HCT116 (cell line): ENCODE measurements at regions of chr3 and their contacts with region 1.

Region 1: DNA sequence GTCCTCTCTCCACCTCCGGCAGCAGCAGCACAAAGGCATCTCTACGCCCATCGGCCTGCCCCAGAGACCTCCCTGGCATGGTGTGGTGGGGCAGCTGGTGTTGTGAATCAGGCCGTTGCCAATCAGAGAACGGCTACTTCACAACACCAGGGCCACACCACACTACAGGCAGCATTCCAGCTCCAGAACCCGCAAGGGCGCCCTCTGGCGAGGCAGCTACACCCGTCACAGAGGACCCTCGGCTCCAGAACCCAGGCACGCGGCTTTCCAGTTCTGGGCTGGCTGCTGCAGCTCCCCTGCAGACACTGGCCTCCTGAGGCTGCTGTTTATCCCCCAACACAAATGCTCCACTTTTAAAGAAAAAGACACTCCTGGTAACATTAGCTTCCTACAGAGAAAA is 127.5 kb upstream of the TOPAZ1 start:
- DNase-seq: peak; percentile 42
- ATAC-seq: peak; percentile 99
- H3K4me3 ChIP-seq: no peak overlapping the region
- H3K27ac ChIP-seq: no peak overlapping the region
- H3K4me1 ChIP-seq: peaks cover 0 to 11% of the 10 kb centered on the region in 2 experiments; a peak in 3 of 4 replicates
- H3K27me3 ChIP-seq: peaks cover 6% of the 10 kb centered on the region; the same call in 1 of the 2 replicates
- CTCF ChIP-seq: peak; percentile 61 to 85 (median 72); a peak in 5 of 6 replicates
- POLR2A ChIP-seq: no peak
- RAD21 ChIP-seq: peak; percentile 69

Region 2: DNA sequence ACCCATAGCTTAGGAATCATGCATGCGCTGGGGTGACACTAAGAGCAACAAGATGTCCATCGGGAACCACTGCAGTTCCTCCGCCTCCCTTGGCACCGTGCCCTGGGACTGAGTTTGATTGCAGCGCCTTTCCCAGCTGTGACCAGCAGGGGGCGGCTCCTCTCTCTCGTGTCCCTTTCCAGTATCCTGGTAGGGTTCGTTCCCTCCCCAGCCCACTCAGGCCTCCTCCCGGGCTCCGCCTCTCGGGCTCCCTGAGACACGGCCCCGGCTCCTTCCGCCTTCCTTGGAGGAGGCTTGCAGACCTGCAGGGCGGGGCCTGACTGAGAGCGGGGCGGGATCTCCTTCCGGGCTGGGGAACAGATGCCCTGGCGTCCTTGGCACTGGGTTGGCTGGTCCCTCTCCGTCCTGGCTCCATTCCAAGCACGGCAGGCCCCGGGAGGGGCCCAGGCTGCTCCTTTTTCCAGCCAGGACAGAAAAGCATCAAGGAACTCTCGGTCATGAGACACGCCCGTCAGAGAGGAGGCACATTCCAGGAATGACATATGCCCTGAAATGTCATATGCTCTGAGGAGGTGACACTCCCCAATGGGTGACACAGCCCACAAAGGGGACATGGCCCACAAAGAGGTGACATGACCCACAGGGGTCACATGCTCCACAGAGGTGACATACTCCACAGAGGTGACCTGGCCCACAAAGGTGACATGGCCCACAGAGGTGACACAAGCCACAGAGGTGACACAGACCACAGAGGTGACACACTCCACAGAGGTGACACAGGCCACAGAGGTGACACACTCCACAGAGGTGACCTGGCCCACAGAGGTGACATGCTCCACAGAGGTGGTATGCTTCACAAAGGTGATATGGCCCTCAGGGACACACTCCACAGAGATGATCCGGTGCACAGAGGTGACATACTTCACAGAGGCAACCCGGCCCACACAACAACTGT is 344.4 kb before region 1 on chr3:
- CTCF ChIA-PET with region 1: interaction called, 6 read pairs
- POLR2A ChIA-PET with region 1: interaction called, 4 read pairs
- RAD21 ChIA-PET with region 1: no interaction called
- intact Hi-C with region 1: loop called (anchors 1 kb)
- DNase-seq: peak; percentile 94
- ATAC-seq: peak; percentile 100
- H3K4me3 ChIP-seq: peak overlapping the region; percentile 21 to 47
- H3K27ac ChIP-seq: peak overlapping the region; percentile 2; the same call in 1 of the 2 replicates
- H3K4me1 ChIP-seq: peaks cover 18 to 39% of the 10 kb centered on the region in 2 experiments
- H3K27me3 ChIP-seq: no peaks in the 10 kb centered on the region
- CTCF ChIP-seq: peak; percentile 84 to 90 (median 89)
- POLR2A ChIP-seq: peak; percentile 26
- RAD21 ChIP-seq: peak; percentile 88

Region 3: GRCh38 chr3:43879166-43879565 is 235.0 kb before region 1 on chr3:
- CTCF ChIA-PET with region 1: interaction called, 10 read pairs
- POLR2A ChIA-PET with region 1: no interaction called
- RAD21 ChIA-PET with region 1: no interaction called
- intact Hi-C with region 1: loop called (anchors 2 kb)
- DNase-seq: peak; percentile 58
- ATAC-seq: peak; percentile 94
- H3K4me3 ChIP-seq: no peak overlapping the region
- H3K27ac ChIP-seq: no peak overlapping the region
- H3K4me1 ChIP-seq: peaks cover 5 to 20% of the 10 kb centered on the region in 2 experiments; a peak in 3 of 4 replicates
- H3K27me3 ChIP-seq: no peaks in the 10 kb centered on the region
- CTCF ChIP-seq: peak; percentile 58 to 63 (median 59); a peak in 5 of 6 replicates
- POLR2A ChIP-seq: no peak
- RAD21 ChIP-seq: peak; percentile 74

Region 4: GRCh38 chr3:44130249-44130648 is 16.1 kb after region 1 on chr3:
- CTCF ChIA-PET with region 1: interaction called, 12 read pairs
- POLR2A ChIA-PET with region 1: no interaction called
- RAD21 ChIA-PET with region 1: no interaction called
- intact Hi-C with region 1: no loop called
- DNase-seq: no peak
- ATAC-seq: no peak
- H3K4me3 ChIP-seq: no peak overlapping the region
- H3K27ac ChIP-seq: no peak overlapping the region
- H3K4me1 ChIP-seq: no peaks in the 10 kb centered on the region
- H3K27me3 ChIP-seq: peaks cover 56% of the 10 kb centered on the region
- CTCF ChIP-seq: no peak
- POLR2A ChIP-seq: no peak
- RAD21 ChIP-seq: no peak